HEK293 (cell line): ENCODE measurements at regions of chr1 and their contacts with region 1.

Region 1: DNA sequence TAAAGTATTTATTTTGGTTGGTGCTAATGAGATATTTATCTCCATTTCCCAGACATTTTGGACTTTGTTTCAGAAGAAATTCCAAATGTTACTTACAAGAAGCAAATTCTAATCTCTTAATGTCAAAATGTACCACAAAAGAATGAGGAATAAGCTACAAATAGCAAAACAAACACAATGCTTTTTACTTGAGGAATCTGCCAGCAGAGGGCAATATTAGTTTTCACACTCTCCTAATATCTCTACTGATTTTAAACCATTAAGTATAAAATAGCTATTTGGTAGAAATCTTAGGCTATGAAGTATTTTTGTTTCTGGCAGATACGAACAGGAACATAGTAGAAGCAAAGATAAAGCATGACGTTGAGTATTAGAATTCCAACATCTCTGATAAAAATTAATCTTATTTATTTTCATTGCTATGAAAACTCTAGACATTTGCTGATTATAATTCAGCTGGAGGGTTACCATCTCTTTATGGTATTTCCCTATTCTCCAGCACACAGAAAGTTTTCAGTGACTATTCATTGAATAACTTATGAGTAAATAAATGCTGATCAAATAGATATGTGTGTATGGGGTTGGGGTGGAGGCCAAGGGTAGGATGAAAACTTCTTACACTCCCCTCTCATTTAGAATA is 13.4 kb upstream of the HMCN1 start:
- H3K4me3 ChIP-seq: no peak overlapping the region
- H3K27ac ChIP-seq: no peak overlapping the region
- H3K4me1 ChIP-seq: no peaks in the 10 kb centered on the region
- CTCF ChIP-seq: no peak

Region 2: DNA sequence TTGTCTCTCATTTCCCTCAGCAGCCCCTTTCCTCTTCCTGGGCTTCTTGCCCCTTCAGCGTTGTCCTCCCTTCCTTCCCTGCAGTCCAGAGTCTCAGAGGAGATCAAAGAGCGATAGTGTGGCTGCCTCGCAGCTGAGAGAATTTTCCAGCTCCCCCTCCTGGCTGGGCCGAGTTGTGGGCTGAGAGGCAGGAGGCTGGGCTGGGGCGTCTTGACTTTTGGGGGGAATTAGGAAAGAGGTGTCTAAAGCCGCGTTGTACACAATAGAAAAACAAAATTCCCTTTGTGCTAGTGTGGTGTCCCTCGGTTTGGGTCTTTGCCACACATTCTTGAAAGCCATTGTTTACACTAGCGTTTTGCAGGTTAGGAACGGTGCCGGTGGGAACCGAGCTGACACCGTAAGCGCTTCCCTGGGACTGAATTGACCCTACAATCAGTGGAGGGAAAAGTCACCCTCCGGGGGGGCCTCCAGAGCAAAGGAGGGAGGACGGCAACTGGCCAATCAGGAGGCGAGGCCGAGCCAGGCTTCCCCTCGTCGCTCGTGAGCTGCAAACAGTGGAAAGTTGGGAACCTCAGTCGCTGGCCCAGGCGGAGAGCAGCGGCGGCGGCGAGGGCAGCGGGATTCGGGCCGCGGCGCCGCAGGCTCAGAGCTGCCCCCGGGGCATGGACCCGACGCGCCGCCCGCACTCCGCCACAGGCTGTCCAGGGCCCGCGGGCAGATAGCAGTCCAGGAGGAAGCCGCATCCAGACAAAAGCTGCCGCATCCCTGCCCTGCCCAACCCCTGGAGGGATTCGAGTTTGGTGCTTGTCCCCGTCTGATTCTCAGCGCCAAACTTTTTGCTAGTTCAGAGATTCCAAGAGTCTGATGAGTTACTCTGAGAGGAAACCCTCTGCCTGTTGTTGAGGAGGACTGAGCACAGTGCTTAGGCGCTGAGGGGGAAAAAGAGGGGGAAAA is 13.3 kb after region 1 on chr1 and contains the start of gene HMCN1:
- CTCF ChIA-PET with region 1: interaction called, 32 read pairs
- POLR2A ChIA-PET with region 1: interaction called, 8 read pairs
- H3K4me3 ChIP-seq: peak within 1 kb of the TSS; percentile 54
- H3K27ac ChIP-seq: peak within 1 kb of the TSS; percentile 59; the same call in 1 of the 2 replicates
- H3K4me1 ChIP-seq: peaks cover 6% of the 10 kb centered on the region; the same call in 1 of the 2 replicates
- CTCF ChIP-seq: peak; percentile 76

Region 3: DNA sequence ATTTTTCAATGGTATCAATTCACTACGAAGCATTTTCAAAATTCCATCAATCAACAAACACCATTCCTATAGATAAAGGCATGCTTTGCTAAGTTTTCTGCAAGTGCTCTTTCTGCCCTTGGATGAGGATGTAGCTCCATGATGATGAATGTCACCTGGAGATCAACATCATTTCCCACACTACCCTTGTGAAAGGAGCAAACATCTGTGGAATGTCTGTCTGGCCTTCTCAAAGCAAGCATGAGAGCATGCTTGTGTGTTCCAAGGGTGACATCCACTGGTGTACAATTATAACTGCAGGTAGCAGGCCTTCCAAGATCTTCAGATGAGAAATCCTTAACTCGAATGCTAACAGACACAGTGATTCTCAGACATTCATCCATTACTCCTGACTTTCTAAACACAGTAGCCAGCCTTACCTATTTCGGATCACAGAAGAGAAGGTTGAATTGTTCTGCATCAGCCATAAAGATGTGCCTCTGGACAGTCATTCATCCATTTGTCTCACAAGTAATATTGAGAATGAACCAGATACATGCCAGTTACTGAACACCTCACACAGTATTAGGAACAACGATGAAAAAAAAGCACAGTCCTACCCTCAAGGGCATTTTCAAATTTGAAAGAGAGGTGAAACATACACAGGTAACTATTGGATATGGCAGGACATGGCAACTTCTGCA is 491.9 kb after region 1 on chr1:
- CTCF ChIA-PET with region 1: interaction called, 44 read pairs
- POLR2A ChIA-PET with region 1: no interaction called
- H3K4me3 ChIP-seq: no peak overlapping the region
- H3K27ac ChIP-seq: no peak overlapping the region
- H3K4me1 ChIP-seq: no peaks in the 10 kb centered on the region
- CTCF ChIP-seq: peak; percentile 84